ENCODE measurements at regions of chr22 and their contacts with region 1.

Region 1: GRCh38 chr22:25777870-25778269 is 35.9 kb downstream of the MYO18B start:
- DNase-seq: no peak
- H3K4me3 ChIP-seq: no peak overlapping the region
- H3K27ac ChIP-seq: no peak overlapping the region
- H3K4me1 ChIP-seq: no peaks in the 10 kb centered on the region
- H3K27me3 ChIP-seq: no peaks in the 10 kb centered on the region
- CTCF ChIP-seq: no peak
- POLR2A ChIP-seq: no peak

Region 2: GRCh38 chr22:25235547-25236290 is 542.2 kb before region 1 on chr22:
- intact Hi-C with region 1: loop called (anchors 10 kb)
- DNase-seq: peak; percentile 83 to 87
- H3K4me3 ChIP-seq: no peak overlapping the region
- H3K27ac ChIP-seq: no peak overlapping the region
- H3K4me1 ChIP-seq: peaks cover 0 to 6% of the 10 kb centered on the region in 2 donors
- H3K27me3 ChIP-seq: no peaks in the 10 kb centered on the region
- CTCF ChIP-seq: peak in 5 of 6 experiments; percentile 60 to 92 (median 69)
- POLR2A ChIP-seq: no peak

Region 3: DNA sequence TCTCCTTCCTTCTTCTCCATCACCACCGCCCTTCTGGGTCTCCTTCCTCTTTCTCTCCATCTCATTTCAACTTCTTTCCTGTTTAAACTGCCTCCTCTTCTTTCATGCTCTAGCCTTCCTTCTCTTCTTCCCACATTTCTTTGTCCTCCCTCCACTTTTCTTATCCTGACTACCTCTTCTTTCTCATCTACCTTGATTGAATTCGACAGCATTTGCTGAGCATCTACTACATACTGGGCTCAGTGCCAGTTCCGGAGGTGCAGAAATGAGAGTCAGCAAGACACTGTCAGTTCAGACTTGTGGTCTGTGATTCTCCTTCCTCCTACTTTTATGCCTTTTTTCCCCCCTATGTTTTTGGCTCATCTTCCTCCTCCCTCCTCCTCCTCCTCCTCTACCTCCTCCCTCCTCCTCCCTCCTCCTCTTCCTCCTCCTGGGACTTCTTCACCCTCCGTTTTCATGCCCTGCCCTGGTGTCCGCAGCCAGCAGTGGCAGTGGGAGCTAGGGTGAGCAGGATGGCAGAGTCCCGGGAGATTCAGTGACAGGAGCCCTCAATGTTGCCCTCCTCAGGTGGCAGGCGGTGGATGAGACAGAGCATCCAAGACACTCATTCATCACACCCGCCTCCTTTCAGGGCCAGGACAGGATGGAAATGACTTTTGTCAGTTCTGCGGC is 245.4 kb after region 1 on chr22:
- intact Hi-C with region 1: no loop called
- DNase-seq: no peak
- H3K4me3 ChIP-seq: no peak overlapping the region
- H3K27ac ChIP-seq: no peak overlapping the region
- H3K4me1 ChIP-seq: no peaks in the 10 kb centered on the region
- H3K27me3 ChIP-seq: no peaks in the 10 kb centered on the region
- CTCF ChIP-seq: no peak
- POLR2A ChIP-seq: no peak

Measured in thyroid gland (tissue), 4 donors.